Activated CD4-positive, alpha-beta memory T cell treated with anti-CD3 and anti-CD28 coated beads for 36 hours (primary cell): ENCODE measurements at regions of chr6 and their contacts with region 1.

Region 1: GRCh38 chr6:31546962-31547726 is at the start of gene NFKBIL1:
- DNase-seq: peak; percentile 96
- H3K4me3 Mint-ChIP-seq: peak within 1 kb of the TSS; percentile 76
- H3K27ac Mint-ChIP-seq: peak within 1 kb of the TSS; percentile 89
- H3K4me1 Mint-ChIP-seq: peaks cover 44% of the 10 kb centered on the region
- H3K27me3 Mint-ChIP-seq: no peaks in the 10 kb centered on the region
- total RNA-seq, gene NFKBIL1: 18.5 to 21.5 TPM

Region 2: DNA sequence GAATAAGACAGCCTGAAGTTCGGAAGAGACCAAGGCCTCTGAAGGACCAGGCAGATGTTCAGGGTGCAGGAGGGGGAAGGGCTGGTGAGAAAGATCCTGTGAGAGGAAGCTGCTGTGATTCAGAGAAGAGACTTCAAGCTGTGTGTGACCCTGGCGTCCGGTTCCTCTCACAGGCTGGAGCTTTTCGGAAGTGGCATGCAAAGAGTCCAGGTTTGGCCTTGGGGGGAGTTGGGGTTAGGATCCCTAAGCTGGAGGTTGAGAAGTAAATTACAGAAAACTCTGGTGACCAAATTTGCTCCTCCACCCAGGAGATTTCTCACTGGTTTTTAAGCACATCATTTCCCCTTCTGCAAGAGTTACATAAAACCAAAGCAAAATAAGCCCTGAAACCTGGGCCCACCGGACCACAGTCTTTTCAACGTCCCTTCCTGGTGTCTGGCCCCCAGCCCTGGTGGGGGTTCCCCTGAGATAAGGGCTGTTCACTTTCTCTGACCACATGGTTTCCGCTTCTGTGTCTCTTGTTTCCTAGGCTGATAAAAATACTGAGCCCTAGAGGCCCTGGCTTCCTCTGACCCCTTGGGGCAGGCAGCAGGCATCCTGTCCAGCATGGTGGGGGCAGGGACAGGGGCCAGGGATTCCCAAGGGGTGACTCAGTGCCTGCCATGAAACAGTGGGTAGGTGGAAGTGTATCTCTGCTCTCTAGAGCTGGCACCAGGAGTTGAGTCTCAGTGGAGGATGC is 13.0 kb after region 1 on chr6:
- CTCF ChIA-PET with region 1: interaction called, 80 read pairs
- POLR2A ChIA-PET with region 1: no interaction called
- intact Hi-C with region 1: no loop called
- DNase-seq: peak; percentile 81
- H3K4me3 Mint-ChIP-seq: peak overlapping the region; percentile 59
- H3K27ac Mint-ChIP-seq: peak overlapping the region; percentile 86
- H3K4me1 Mint-ChIP-seq: peaks cover 80% of the 10 kb centered on the region
- H3K27me3 Mint-ChIP-seq: no peaks in the 10 kb centered on the region

Region 3: GRCh38 chr6:31575335-31575901 is 28.3 kb after region 1 on chr6 and contains the start of gene TNF:
- CTCF ChIA-PET with region 1: interaction called, 1,658 read pairs
- POLR2A ChIA-PET with region 1: interaction called, 125 read pairs
- intact Hi-C with region 1: loop called (anchors 1 kb)
- DNase-seq: peak; percentile 93
- H3K4me3 Mint-ChIP-seq: peak within 1 kb of the TSS; percentile 97
- H3K27ac Mint-ChIP-seq: peak within 1 kb of the TSS; percentile 99
- H3K4me1 Mint-ChIP-seq: peaks cover 54% of the 10 kb centered on the region
- H3K27me3 Mint-ChIP-seq: peaks cover 2% of the 10 kb centered on the region
- total RNA-seq, gene TNF: 165 to 167 TPM

Region 4: GRCh38 chr6:31597006-31597405 is 49.9 kb after region 1 on chr6:
- CTCF ChIA-PET with region 1: interaction called, 1,658 read pairs
- POLR2A ChIA-PET with region 1: interaction called, 10 read pairs
- intact Hi-C with region 1: loop called (anchors 1 kb)
- DNase-seq: peak; percentile 53
- H3K4me3 Mint-ChIP-seq: no peak overlapping the region
- H3K27ac Mint-ChIP-seq: peak overlapping the region; percentile 56
- H3K4me1 Mint-ChIP-seq: peaks cover 37% of the 10 kb centered on the region
- H3K27me3 Mint-ChIP-seq: no peaks in the 10 kb centered on the region

Region 5: DNA sequence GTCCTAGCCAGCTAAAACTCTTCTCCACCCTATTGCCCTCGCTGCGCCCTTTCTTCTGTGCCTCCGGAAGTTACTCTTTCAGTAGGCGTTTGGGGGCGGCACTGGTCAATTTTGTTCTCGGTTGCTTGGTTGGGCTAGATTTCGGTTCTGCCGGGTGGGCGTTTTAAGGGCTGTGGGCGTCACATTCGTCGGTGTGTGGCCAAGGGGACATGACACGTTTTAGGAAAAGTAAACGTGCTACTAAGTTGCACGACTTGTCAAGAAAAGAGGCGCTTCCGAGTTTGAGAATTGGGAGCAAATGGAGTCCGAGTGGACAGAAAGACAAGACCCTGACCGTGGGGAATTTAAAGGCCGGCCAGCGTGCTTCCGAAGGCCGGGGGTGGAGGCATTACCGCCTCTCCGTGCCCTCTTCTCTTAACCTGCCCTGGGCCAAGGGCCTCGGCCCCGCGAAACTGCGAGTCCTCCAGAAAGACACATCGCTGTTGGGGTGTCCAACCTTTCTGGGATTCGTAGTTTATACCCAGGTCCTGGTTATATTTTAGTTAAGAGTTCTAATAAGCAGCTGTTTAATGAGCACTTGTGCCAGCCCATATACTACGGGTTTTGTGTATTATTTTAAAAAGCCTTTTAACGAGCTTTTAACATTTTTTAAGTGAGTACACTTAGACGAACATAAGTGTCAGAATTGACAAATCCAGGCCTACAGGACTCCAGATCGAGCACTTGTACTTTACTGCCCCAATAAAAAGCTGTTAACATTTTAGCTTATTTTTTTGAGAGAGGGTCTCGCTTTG is 106.0 kb after region 1 on chr6:
- CTCF ChIA-PET with region 1: interaction called, 5 read pairs
- POLR2A ChIA-PET with region 1: interaction called, 13 read pairs
- intact Hi-C with region 1: loop called (anchors 1 kb)
- DNase-seq: peak; percentile 92
- H3K4me3 Mint-ChIP-seq: peak overlapping the region; percentile 94
- H3K27ac Mint-ChIP-seq: peak overlapping the region; percentile 99
- H3K4me1 Mint-ChIP-seq: peaks cover 54% of the 10 kb centered on the region
- H3K27me3 Mint-ChIP-seq: no peaks in the 10 kb centered on the region

Region 6: GRCh38 chr6:31908791-31909190 is 361.6 kb after region 1 on chr6:
- CTCF ChIA-PET with region 1: no interaction called
- POLR2A ChIA-PET with region 1: no interaction called
- intact Hi-C with region 1: no loop called
- DNase-seq: no peak
- H3K4me3 Mint-ChIP-seq: no peak overlapping the region
- H3K27ac Mint-ChIP-seq: no peak overlapping the region
- H3K4me1 Mint-ChIP-seq: peaks cover 12% of the 10 kb centered on the region
- H3K27me3 Mint-ChIP-seq: peaks cover 5% of the 10 kb centered on the region